ENCODE measurements at regions of chr10 and their contacts with region 1.

Region 1: DNA sequence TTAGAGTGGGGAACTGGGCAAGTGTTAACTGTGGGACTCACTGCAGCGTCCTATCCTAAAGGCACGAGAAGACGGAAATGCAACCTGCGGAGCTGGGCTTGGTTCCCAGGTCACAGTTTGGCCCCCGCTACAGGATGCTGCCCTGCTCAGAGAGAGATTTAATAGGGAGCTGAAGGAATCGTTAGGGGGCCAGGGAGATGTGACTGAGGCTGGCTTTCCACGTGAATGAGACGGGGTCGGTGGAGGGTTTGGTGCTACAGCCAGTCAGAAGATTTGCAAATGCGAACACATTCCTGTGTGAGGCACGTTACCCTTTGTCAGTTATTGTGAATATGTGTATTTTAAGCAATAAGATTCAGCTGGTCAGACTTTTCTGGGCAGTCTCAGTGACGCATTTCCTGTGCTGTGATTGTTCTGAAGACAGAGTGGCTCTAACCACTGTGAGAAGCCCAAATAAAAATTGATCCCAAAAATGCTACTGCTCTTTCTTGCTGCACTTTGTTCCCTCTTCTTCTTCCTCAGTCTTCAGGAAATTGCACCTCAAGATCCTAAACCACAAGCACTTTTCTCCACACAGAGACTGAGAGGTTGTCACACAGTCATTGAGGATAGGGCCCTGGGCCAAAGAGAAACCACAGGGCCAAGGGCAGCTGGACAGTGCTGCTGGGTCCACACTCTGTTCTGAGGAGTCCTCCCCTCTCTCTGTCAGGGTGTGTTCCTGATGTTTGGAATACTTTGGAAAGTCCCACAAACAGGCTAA is 21.2 kb downstream of the CYP17A1 start:
- DNase-seq: peak; percentile 90 to 97 (median 91)
- H3K4me3 ChIP-seq: peak overlapping the region in 1 of 3 experiments; percentile 35
- H3K4me3 Mint-ChIP-seq: peak overlapping the region; percentile 34 to 74
- H3K27ac ChIP-seq: peak overlapping the region; percentile 98 to 99
- H3K27ac Mint-ChIP-seq: peak overlapping the region; percentile 99 to 100 (median 99)
- H3K4me1 ChIP-seq: peaks cover 90% of the 10 kb centered on the region in 2 donors
- H3K4me1 Mint-ChIP-seq: peaks cover 82% of the 10 kb centered on the region
- H3K27me3 ChIP-seq: no peaks in the 10 kb centered on the region
- H3K27me3 Mint-ChIP-seq: peaks cover 0 to 3% (median 0%) of the 10 kb centered on the region in 3 donors
- CTCF ChIP-seq: no peak

Region 2: GRCh38 chr10:102773986-102774737 is 41.8 kb before region 1 on chr10:
- intact Hi-C with region 1: loop called (anchors 5 kb)
- DNase-seq: peak; percentile 74 to 86 (median 80)
- H3K4me3 ChIP-seq: no peak overlapping the region
- H3K4me3 Mint-ChIP-seq: peak overlapping the region in 1 of 2 donors; percentile 16
- H3K27ac ChIP-seq: peak overlapping the region; percentile 72 to 87
- H3K27ac Mint-ChIP-seq: peak overlapping the region; percentile 95 to 99 (median 98)
- H3K4me1 ChIP-seq: peaks cover 42 to 47% of the 10 kb centered on the region in 2 donors
- H3K4me1 Mint-ChIP-seq: peaks cover 44% of the 10 kb centered on the region
- H3K27me3 ChIP-seq: no peaks in the 10 kb centered on the region
- H3K27me3 Mint-ChIP-seq: no peaks in the 10 kb centered on the region
- CTCF ChIP-seq: no peak

Measured in CD14-positive monocyte (primary cell).